Heart left ventricle (tissue), 16 donors: ENCODE measurements at regions of chr6 and their contacts with region 1.

Region 1: DNA sequence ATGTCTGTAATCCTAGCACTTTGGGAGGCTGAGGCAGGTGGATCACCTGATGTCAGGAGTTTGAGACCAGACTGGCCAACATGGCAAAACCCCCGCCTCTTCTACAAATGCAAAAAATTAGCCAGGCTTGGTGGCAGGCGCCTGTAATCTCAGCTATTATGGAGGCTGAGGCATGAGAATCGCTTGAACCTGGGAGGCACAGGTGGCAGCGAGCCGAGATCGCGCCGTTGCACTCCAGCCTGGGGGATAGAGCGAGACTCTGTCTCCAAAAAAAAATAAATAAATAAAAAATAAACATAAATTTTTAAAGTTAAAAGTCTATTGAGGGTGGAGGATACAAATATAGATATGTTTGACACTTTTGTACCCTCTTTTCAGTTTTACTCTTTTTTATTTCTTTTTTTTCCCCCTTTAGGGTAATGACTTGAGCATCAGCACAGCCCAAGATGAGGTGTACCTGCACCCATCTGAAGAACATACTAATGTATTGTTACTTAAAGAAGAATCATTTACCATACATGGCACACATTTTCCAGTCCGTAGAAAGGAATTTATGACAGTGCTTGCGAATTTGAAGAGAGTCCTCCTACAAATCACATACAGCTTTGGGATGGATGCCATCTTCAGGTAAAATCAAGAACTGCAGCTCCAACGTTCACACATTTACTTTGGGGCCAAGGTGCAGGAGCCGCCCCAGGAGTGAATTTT is 368.9 kb downstream of the LAMA2 start:
- DNase-seq: peak in 1 of 5 donors; percentile 37
- ATAC-seq: peak in 3 of 4 donors; percentile 30 to 34 (median 33)
- H3K4me3 ChIP-seq: no peak overlapping the region
- H3K27ac ChIP-seq: peak overlapping the region in 2 of 12 donors; percentile 41 to 42
- H3K4me1 ChIP-seq: peaks cover 0 to 39% (median 20%) of the 10 kb centered on the region in 12 donors
- H3K27me3 ChIP-seq: no peaks in the 10 kb centered on the region
- CTCF ChIP-seq: peak; percentile 56 to 82 (median 74)
- POLR2A ChIP-seq: no peak

Region 2: GRCh38 chr6:128807577-128807976 is 444.2 kb before region 1 on chr6:
- intact Hi-C with region 1: loop called in 7 of 10 experiments (anchors 5 to 10 kb)
- DNase-seq: no peak
- ATAC-seq: peak in 2 of 4 donors; percentile 23 to 25
- H3K4me3 ChIP-seq: no peak overlapping the region
- H3K27ac ChIP-seq: peak overlapping the region in 1 of 12 donors; percentile 6
- H3K4me1 ChIP-seq: peaks cover 0 to 16% (median 3%) of the 10 kb centered on the region in 12 donors
- H3K27me3 ChIP-seq: no peaks in the 10 kb centered on the region
- CTCF ChIP-seq: peak; percentile 15 to 65 (median 48)
- POLR2A ChIP-seq: no peak

Region 3: GRCh38 chr6:128882991-128883611 is 368.7 kb before region 1 on chr6 and contains the start of gene LAMA2:
- intact Hi-C with region 1: loop called in 1 of 10 experiments (anchors 10 kb)
- DNase-seq: peak; percentile 89 to 94 (median 90)
- ATAC-seq: peak; percentile 98 to 99 (median 98)
- H3K4me3 ChIP-seq: peak within 1 kb of the TSS; percentile 35 to 82 (median 67)
- H3K27ac ChIP-seq: peak within 1 kb of the TSS; percentile 76 to 96 (median 90)
- H3K4me1 ChIP-seq: peaks cover 0 to 21% (median 6%) of the 10 kb centered on the region in 12 donors
- H3K27me3 ChIP-seq: no peaks in the 10 kb centered on the region
- CTCF ChIP-seq: peak in 10 of 12 donors; percentile 8 to 63 (median 42)
- POLR2A ChIP-seq: peak; percentile 45 to 97
- total RNA-seq, gene LAMA2: 156 to 299 (median 207) TPM

Region 4: GRCh38 chr6:128981716-128982115 is 270.1 kb before region 1 on chr6:
- intact Hi-C with region 1: loop called in 1 of 10 experiments (anchors 5 kb)
- DNase-seq: no peak
- ATAC-seq: no peak
- H3K4me3 ChIP-seq: no peak overlapping the region
- H3K27ac ChIP-seq: peak overlapping the region in 2 of 12 donors; percentile 4 to 36
- H3K4me1 ChIP-seq: peaks cover 0 to 31% (median 10%) of the 10 kb centered on the region in 12 donors
- H3K27me3 ChIP-seq: no peaks in the 10 kb centered on the region
- CTCF ChIP-seq: no peak
- POLR2A ChIP-seq: no peak

Region 5: GRCh38 chr6:129130959-129131681 is 120.7 kb before region 1 on chr6:
- intact Hi-C with region 1: loop called in 2 of 10 experiments (anchors 2 to 10 kb)
- DNase-seq: peak in 4 of 5 donors; percentile 33 to 65 (median 58)
- ATAC-seq: peak; percentile 60 to 81 (median 72)
- H3K4me3 ChIP-seq: no peak overlapping the region
- H3K27ac ChIP-seq: peak overlapping the region in 11 of 12 donors; percentile 41 to 90 (median 75)
- H3K4me1 ChIP-seq: peaks cover 0 to 72% (median 43%) of the 10 kb centered on the region in 12 donors
- H3K27me3 ChIP-seq: no peaks in the 10 kb centered on the region
- CTCF ChIP-seq: no peak
- POLR2A ChIP-seq: no peak

Region 6: GRCh38 chr6:129138739-129139405 is 113.0 kb before region 1 on chr6:
- intact Hi-C with region 1: loop called in 2 of 10 experiments (anchors 2 to 10 kb)
- DNase-seq: no peak
- ATAC-seq: peak; percentile 25 to 78 (median 51)
- H3K4me3 ChIP-seq: no peak overlapping the region
- H3K27ac ChIP-seq: peak overlapping the region; percentile 18 to 90 (median 76)
- H3K4me1 ChIP-seq: peaks cover 0 to 89% (median 56%) of the 10 kb centered on the region in 12 donors
- H3K27me3 ChIP-seq: no peaks in the 10 kb centered on the region
- CTCF ChIP-seq: no peak
- POLR2A ChIP-seq: no peak